ENCODE measurements at regions of chr5 and their contacts with region 1.

Region 1: DNA sequence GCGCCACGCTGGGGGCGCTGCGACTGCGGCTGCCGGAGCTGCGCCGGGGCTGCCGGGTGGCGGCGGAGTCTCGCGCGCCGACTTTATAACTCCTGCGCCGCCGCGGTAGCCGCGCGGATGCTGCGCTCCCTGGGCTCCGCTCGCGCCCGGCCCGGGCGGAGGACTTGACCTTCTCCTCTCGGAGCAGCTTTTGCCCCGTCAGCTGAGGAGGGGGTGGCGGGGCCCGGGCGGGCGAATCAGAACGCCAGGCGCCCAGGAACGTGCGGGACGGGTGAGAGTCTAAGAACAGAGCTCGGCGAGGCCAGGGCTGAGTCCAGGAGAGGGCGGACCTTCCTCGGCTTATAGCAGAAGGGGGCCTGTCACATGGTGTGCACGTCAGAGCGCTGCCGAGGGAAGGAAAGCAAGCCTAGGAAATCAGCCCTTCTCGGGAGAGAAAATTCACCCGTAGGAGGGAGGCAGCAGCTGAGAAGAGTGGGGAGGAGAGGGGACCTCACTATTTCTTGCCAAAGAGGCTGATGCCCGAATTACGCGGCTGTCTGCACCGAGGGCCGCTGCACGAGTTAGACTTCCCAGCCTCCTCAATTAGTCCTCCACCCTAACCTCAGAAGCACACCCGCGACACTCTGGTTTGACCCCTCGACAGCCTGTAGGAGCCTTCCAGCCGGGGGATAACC is at the start of gene FOXD1:
- DNase-seq: peak in 2 of 9 donors; percentile 27 to 30
- ATAC-seq: peak; percentile 49
- H3K4me3 ChIP-seq: peak within 1 kb of the TSS; percentile 39
- H3K4me3 Mint-ChIP-seq: peak within 1 kb of the TSS; percentile 85 to 90 (median 87)
- H3K27ac ChIP-seq: no peak within 1 kb of the TSS
- H3K27ac Mint-ChIP-seq: peak within 1 kb of the TSS in 8 of 9 donors; percentile 33 to 88 (median 69)
- H3K4me1 ChIP-seq: peaks cover 11 to 14% of the 10 kb centered on the region in 2 donors
- H3K4me1 Mint-ChIP-seq: peaks cover 0 to 29% (median 21%) of the 10 kb centered on the region in 7 donors
- H3K27me3 ChIP-seq: peaks cover 66 to 75% of the 10 kb centered on the region in 2 donors
- H3K27me3 Mint-ChIP-seq: peaks cover 70 to 83% (median 74%) of the 10 kb centered on the region in 5 donors
- total RNA-seq, gene FOXD1: 0.16 to 0.32 TPM in 2 of 5 experiments, not detected in the others

Region 2: GRCh38 chr5:72920690-72921502 is 527.7 kb before region 1 on chr5:
- CTCF ChIA-PET with region 1: no interaction called
- POLR2A ChIA-PET with region 1: no interaction called
- intact Hi-C with region 1: loop called (anchors 2 to 5 kb)
- DNase-seq: peak in 1 of 9 donors; percentile 1
- ATAC-seq: peak; percentile 50
- H3K4me3 ChIP-seq: no peak overlapping the region
- H3K4me3 Mint-ChIP-seq: no peak overlapping the region
- H3K27ac ChIP-seq: no peak overlapping the region
- H3K27ac Mint-ChIP-seq: no peak overlapping the region
- H3K4me1 ChIP-seq: no peaks in the 10 kb centered on the region
- H3K4me1 Mint-ChIP-seq: peaks cover 0 to 1% (median 0%) of the 10 kb centered on the region in 7 donors
- H3K27me3 ChIP-seq: no peaks in the 10 kb centered on the region
- H3K27me3 Mint-ChIP-seq: no peaks in the 10 kb centered on the region

Region 3: DNA sequence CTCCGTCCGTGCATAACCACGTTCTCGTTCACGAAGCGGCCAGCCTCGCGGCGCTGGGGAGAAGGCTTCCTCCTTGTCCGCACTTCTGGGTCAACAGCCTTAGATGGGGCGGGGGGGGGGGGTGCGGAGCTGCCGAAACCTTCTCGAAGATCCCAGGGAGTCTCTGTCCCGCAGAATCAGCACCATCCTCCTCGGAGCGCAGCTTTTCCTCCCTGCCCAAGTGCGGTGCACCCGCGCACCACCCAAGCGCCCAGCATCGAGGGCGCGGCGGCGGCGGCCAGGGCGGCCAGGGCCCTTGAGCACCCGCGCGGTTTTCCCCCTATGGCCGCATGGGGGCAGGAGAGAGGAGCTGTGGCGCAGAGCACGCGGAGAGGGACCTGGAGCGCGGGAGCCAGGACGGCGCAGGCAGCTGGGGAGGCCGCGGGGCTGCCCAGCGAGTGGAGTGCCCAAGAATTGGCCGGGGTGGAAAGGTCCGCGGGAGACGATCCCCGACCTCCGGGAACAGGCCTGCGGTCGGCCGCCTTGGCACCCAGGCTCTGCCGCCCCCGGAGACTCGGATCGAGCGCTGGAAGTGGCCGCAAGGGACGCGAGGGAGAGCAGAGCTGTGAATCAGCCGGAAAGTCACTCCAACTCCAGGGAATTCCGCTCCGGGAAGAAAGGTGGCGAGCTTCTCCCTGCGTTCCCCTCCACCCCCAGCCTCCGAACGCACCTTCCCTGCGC is 232.5 kb before region 1 on chr5:
- CTCF ChIA-PET with region 1: interaction called, 6 read pairs
- POLR2A ChIA-PET with region 1: interaction called, 3 read pairs
- intact Hi-C with region 1: loop called (anchors 1 kb)
- DNase-seq: peak; percentile 28 to 64 (median 54)
- ATAC-seq: peak; percentile 93
- H3K4me3 ChIP-seq: peak overlapping the region; percentile 20
- H3K4me3 Mint-ChIP-seq: peak overlapping the region in 8 of 10 donors; percentile 21 to 73 (median 63)
- H3K27ac ChIP-seq: no peak overlapping the region
- H3K27ac Mint-ChIP-seq: no peak overlapping the region
- H3K4me1 ChIP-seq: no peaks in the 10 kb centered on the region
- H3K4me1 Mint-ChIP-seq: peaks cover 0 to 14% (median 6%) of the 10 kb centered on the region in 7 donors
- H3K27me3 ChIP-seq: peaks cover 11 to 15% of the 10 kb centered on the region in 2 donors
- H3K27me3 Mint-ChIP-seq: peaks cover 70 to 86% (median 81%) of the 10 kb centered on the region in 5 donors

Region 4: DNA sequence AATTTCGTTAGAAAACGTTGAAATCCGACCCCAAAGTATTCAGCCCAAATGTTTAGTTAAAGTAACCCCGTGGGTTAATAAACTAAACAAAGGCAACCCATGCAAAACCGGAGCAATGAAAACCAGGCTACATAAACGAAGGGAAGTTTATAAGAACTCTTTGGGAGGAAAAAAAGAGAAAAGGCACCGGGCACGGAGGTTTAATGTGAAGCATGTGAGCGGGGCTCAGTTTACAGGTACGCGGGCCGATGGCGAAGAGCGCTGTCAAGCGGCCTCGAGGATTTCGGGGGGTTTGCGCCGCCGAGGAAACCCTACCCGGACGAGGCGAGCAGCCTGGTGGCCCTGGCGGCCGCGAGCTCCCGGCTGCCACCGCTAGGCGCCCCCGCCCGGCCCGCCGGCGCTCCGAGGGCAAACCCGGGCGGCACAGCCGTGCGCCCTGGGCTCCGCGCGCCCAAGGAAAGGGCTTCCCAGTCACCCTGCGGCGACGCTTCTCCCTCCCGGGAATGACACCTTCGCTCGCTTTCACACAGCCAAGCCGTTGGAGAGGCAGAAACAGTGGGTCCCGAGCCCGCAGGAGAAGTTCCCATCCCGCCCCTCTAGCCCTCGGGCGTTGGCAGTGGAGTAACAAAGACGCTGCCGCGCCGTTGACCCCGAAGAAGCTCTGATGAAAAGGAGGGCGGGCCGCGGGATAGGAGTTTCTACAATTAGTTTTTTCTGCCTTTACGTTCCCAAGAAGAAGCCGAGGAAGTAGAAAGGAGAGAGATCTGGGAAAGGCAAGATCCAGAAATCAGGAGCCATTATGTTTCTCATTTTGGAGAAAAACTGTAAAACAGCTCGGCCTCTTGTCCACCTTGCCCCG is 149.6 kb before region 1 on chr5:
- CTCF ChIA-PET with region 1: interaction called, 3 read pairs
- POLR2A ChIA-PET with region 1: no interaction called
- intact Hi-C with region 1: loop called in 1 of 2 experiments (anchors 1 kb)
- DNase-seq: peak in 1 of 9 donors; percentile 29
- ATAC-seq: no peak
- H3K4me3 ChIP-seq: no peak overlapping the region
- H3K4me3 Mint-ChIP-seq: peak overlapping the region in 8 of 10 donors; percentile 2 to 71 (median 34)
- H3K27ac ChIP-seq: no peak overlapping the region
- H3K27ac Mint-ChIP-seq: peak overlapping the region in 1 of 9 donors; percentile 75
- H3K4me1 ChIP-seq: no peaks in the 10 kb centered on the region
- H3K4me1 Mint-ChIP-seq: peaks cover 7 to 39% (median 28%) of the 10 kb centered on the region in 7 donors
- H3K27me3 ChIP-seq: peaks cover 10 to 21% of the 10 kb centered on the region in 2 donors
- H3K27me3 Mint-ChIP-seq: peaks cover 83 to 91% (median 86%) of the 10 kb centered on the region in 5 donors

Region 5: GRCh38 chr5:73378070-73378469 is 70.5 kb before region 1 on chr5:
- CTCF ChIA-PET with region 1: no interaction called
- POLR2A ChIA-PET with region 1: interaction called, 3 read pairs
- intact Hi-C with region 1: loop called in 1 of 2 experiments (anchors 2 kb)
- DNase-seq: no peak
- ATAC-seq: no peak
- H3K4me3 ChIP-seq: no peak overlapping the region
- H3K4me3 Mint-ChIP-seq: no peak overlapping the region
- H3K27ac ChIP-seq: no peak overlapping the region
- H3K27ac Mint-ChIP-seq: no peak overlapping the region
- H3K4me1 ChIP-seq: peaks cover 6 to 15% of the 10 kb centered on the region in 2 donors
- H3K4me1 Mint-ChIP-seq: peaks cover 5 to 22% (median 15%) of the 10 kb centered on the region in 7 donors
- H3K27me3 ChIP-seq: peaks cover 14 to 46% of the 10 kb centered on the region in 2 donors
- H3K27me3 Mint-ChIP-seq: peaks cover 77 to 82% (median 80%) of the 10 kb centered on the region in 5 donors

Region 6: DNA sequence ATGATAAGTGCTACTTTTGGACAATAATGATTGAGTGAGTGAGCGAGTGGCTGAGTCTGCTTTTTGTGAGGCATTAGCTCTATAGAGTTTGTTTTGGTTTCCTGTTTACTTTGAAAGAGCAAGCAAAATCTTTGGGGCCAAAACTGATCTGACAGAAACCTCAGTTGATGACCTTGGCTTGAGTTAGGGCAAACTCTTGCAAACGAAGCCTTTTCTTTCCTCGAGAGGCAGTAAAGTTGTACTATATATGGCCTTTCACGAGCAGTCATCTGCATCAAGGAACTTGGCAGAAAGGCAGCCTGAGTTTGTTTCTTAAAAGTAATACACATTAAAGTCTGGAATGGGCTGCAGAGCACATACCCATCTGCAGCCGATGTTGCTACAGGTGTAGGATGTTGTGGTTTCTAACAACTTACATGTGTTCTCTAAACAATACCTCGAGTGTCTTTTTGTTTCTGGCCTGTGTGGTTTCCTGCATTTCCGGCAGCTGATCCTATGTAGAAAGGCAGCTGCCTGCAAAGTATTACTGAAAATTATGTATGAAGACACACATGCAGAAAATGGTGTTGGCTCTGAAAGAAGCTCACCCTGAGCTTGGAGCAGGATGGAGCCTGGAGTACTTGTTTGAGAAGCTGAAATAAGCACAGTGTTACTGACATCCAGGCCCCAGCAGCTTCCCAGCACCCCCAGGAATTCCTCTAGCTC is 60.8 kb before region 1 on chr5:
- CTCF ChIA-PET with region 1: no interaction called
- POLR2A ChIA-PET with region 1: interaction called, 3 read pairs
- intact Hi-C with region 1: loop called in 1 of 2 experiments (anchors 2 kb)
- DNase-seq: peak in 8 of 9 donors; percentile 28 to 90 (median 82)
- ATAC-seq: peak; percentile 96
- H3K4me3 ChIP-seq: peak overlapping the region; percentile 3
- H3K4me3 Mint-ChIP-seq: peak overlapping the region; percentile 39 to 76 (median 72)
- H3K27ac ChIP-seq: no peak overlapping the region
- H3K27ac Mint-ChIP-seq: peak overlapping the region in 6 of 9 donors; percentile 1 to 81 (median 37)
- H3K4me1 ChIP-seq: peaks cover 20 to 31% of the 10 kb centered on the region in 2 donors
- H3K4me1 Mint-ChIP-seq: peaks cover 16 to 34% (median 24%) of the 10 kb centered on the region in 7 donors
- H3K27me3 ChIP-seq: peaks cover 8 to 11% of the 10 kb centered on the region in 2 donors
- H3K27me3 Mint-ChIP-seq: peaks cover 24 to 68% (median 35%) of the 10 kb centered on the region in 5 donors

Region 7: DNA sequence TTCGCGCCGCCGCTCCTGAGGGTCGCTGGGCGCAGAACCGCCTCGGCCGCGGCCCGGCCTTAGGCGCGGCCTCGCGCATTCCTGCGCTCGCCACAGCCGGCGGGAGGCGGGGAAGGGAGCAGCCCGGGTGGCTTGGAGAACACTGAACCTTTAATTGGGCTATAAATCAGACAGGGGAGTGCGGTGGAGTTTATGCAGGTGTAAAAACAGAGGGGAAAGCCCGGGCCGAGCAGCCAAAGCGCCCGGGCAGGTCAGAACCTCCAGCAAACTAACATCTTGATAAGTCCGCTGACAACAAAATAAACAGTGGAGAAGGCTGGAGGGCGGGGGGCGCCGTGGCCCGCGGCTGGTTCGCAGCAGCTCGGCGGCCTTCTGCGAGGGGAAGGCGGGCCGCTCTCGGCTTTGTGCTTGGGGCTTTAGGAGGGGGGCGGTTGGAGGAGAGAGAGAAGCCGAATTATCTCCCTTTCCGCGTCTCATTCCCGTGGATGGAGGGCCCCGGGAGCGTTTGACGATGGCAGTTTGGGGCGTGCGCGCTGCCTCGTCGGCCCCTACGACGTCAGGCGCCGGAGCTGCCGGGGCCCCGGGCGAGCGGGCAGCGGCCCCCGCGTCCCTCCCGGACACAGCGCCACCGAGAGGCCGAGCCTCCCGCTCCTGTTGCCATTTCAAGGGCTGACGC is 11.4 kb before region 1 on chr5:
- CTCF ChIA-PET with region 1: interaction called, 6 read pairs
- POLR2A ChIA-PET with region 1: interaction called, 8 read pairs
- intact Hi-C with region 1: loop called (anchors 1 kb)
- DNase-seq: no peak
- ATAC-seq: peak; percentile 8
- H3K4me3 ChIP-seq: no peak overlapping the region
- H3K4me3 Mint-ChIP-seq: peak overlapping the region in 7 of 10 donors; percentile 49 to 74 (median 66)
- H3K27ac ChIP-seq: no peak overlapping the region
- H3K27ac Mint-ChIP-seq: peak overlapping the region in 1 of 9 donors; percentile 46
- H3K4me1 ChIP-seq: peaks cover 0 to 3% of the 10 kb centered on the region in 2 donors
- H3K4me1 Mint-ChIP-seq: peaks cover 0 to 20% (median 6%) of the 10 kb centered on the region in 7 donors
- H3K27me3 ChIP-seq: peaks cover 35 to 50% of the 10 kb centered on the region in 2 donors
- H3K27me3 Mint-ChIP-seq: peaks cover 87 to 90% (median 89%) of the 10 kb centered on the region in 5 donors

Region 8: DNA sequence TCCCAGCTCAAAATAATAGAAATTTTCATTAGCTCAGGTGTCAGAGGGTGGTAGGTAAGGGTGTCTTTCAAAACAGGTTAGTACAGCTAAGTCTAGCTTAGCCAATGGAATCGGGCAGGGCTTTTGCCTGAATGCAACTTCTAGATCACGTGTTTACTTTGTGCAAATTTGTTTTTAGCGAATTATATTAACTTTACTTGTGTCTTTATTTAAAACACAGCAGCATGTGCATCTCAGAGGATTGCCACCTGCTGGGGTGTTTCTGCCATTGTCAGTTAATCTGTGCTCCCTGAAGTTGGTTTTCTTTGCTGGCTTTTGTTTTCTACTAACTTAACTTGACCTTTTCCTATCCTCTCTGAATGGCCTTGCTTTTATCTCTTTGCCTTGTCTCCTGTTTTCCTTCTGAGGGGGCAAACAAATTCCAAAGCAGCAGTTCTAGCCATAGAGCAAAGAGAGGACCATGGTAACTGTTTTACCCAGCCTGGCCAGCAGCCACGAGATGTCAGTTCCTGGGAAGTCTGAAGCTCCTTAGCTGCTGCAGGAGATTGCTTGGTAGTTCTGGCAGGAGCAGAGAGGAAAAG is 245.0 kb after region 1 on chr5:
- CTCF ChIA-PET with region 1: no interaction called
- POLR2A ChIA-PET with region 1: no interaction called
- intact Hi-C with region 1: no loop called
- DNase-seq: peak in 1 of 9 donors; percentile 1
- ATAC-seq: no peak
- H3K4me3 ChIP-seq: no peak overlapping the region
- H3K4me3 Mint-ChIP-seq: no peak overlapping the region
- H3K27ac ChIP-seq: no peak overlapping the region
- H3K27ac Mint-ChIP-seq: no peak overlapping the region
- H3K4me1 ChIP-seq: peaks cover 0 to 6% of the 10 kb centered on the region in 2 donors
- H3K4me1 Mint-ChIP-seq: peaks cover 0 to 17% (median 0%) of the 10 kb centered on the region in 7 donors
- H3K27me3 ChIP-seq: no peaks in the 10 kb centered on the region
- H3K27me3 Mint-ChIP-seq: peaks cover 6 to 36% (median 23%) of the 10 kb centered on the region in 5 donors